Left ventricle myocardium inferior (tissue), 1 donor: ENCODE measurements at regions of chr1 and their contacts with region 1.

Region 1: GRCh38 chr1:76330991-76331603 is 256.6 kb downstream of the ST6GALNAC3 start:
- DNase-seq: no peak
- H3K4me3 ChIP-seq: no peak overlapping the region
- H3K27ac ChIP-seq: no peak overlapping the region
- H3K4me1 ChIP-seq: no peaks in the 10 kb centered on the region
- H3K27me3 ChIP-seq: no peaks in the 10 kb centered on the region
- CTCF ChIP-seq: peak; percentile 86

Region 2: DNA sequence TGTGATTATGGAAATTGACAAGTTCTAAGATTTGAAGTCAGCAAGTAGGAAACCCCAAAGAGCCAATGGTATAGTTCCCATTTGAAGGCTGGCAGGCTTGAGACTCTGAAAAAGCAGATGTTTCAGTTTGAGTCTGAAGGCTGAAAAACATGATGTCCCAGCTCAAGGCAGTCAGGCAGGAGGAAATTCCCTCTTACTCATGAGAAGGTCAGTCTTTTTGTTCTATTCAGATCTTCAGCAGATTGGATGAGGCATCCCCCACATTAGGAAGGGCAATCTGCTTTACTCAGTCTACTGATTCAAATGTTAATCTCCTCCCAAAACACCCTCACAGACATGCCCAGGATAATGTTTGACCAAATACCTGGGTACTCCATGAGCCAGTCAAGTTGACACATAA is 163.7 kb after region 1 on chr1:
- intact Hi-C with region 1: no loop called
- DNase-seq: no peak
- H3K4me3 ChIP-seq: no peak overlapping the region
- H3K27ac ChIP-seq: no peak overlapping the region
- H3K4me1 ChIP-seq: no peaks in the 10 kb centered on the region
- H3K27me3 ChIP-seq: no peaks in the 10 kb centered on the region
- CTCF ChIP-seq: no peak

Region 3: GRCh38 chr1:77134359-77134758 is 803.3 kb after region 1 on chr1:
- intact Hi-C with region 1: loop called (anchors 10 kb)
- DNase-seq: no peak
- H3K4me3 ChIP-seq: no peak overlapping the region
- H3K27ac ChIP-seq: no peak overlapping the region
- H3K4me1 ChIP-seq: peaks cover 10% of the 10 kb centered on the region
- H3K27me3 ChIP-seq: no peaks in the 10 kb centered on the region
- CTCF ChIP-seq: no peak